GM12878 (cell line): ENCODE measurements at regions of chr15 and their contacts with region 1.

Region 1: DNA sequence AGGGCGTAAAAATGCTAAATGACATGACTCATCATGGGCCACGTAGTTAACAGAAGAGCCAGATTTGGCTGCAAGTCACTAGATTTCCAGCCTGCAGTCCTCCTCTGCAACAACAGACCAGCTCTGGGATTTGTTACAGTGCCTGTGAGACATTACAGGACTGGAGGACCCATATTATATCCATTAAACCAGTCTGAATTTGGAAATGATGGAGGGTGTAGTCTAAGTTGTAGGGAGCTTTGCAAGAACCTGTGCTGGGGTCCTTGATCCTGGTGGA is 10.8 kb downstream of the ZNF774 start:
- DNase-seq: no peak
- ATAC-seq: no peak
- H3K4me3 ChIP-seq: no peak overlapping the region
- H3K27ac ChIP-seq: no peak overlapping the region
- H3K4me1 ChIP-seq: no peaks in the 10 kb centered on the region
- H3K27me3 ChIP-seq: no peaks in the 10 kb centered on the region
- CTCF ChIP-seq: no peak
- EP300 ChIP-seq: no peak
- POLR2A ChIP-seq: no peak
- RAD21 ChIP-seq: no peak

Region 2: DNA sequence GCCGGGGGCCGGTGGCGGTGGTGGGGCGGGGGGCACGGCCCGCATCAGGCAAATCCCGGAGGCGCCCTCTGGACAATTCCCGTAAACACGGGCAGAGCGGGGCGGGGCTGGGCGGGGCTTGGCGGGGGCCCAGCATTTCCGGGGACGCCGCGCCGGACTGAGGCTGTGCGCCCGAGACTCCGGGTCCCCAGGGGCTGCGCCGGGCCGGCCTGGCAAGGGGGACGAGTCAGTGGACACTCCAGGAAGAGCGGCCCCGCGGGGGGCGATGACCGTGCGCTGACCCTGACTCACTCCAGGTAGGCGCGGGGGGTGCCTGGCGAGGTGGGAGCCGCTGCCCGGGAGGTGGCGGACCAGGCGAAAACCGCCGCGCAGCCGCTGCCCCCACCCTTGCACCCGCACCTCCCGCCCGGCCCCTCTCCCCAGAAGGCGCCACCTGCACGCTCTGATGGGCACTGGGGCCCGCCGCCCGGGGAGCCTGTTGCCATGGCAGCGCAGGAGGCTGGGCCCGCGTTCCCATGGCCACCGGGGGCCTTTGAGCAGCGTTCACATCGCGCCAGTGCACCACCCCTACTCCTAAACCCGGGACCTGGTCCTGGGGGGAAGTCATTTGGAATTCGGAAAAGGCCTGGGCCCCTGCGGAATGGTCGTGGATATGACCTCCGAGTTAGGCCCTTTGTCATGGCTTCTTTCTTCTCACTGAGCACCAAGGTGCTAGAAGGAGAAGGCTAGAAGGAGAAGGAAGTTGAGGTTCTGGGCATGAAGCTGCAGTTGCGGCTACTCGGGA is 177.9 kb before region 1 on chr15:
- CTCF ChIA-PET with region 1: no interaction called
- POLR2A ChIA-PET with region 1: no interaction called
- RAD21 ChIA-PET with region 1: no interaction called
- SMC1A ChIA-PET with region 1: no interaction called
- in situ Hi-C with region 1: no loop called
- intact Hi-C with region 1: no loop called
- DNase-seq: no peak
- ATAC-seq: peak; percentile 92
- H3K4me3 ChIP-seq: peak overlapping the region; percentile 80
- H3K27ac ChIP-seq: peak overlapping the region; percentile 86
- H3K4me1 ChIP-seq: peaks cover 16% of the 10 kb centered on the region
- H3K27me3 ChIP-seq: no peaks in the 10 kb centered on the region
- CTCF ChIP-seq: no peak
- EP300 ChIP-seq: no peak
- POLR2A ChIP-seq: peak; percentile 66
- RAD21 ChIP-seq: no peak

Region 3: GRCh38 chr15:90306560-90306959 is 56.3 kb before region 1 on chr15:
- CTCF ChIA-PET with region 1: interaction called, 11 read pairs
- POLR2A ChIA-PET with region 1: no interaction called
- RAD21 ChIA-PET with region 1: no interaction called
- SMC1A ChIA-PET with region 1: interaction called, 4 read pairs
- in situ Hi-C with region 1: no loop called
- intact Hi-C with region 1: no loop called
- DNase-seq: peak; percentile 36
- ATAC-seq: peak; percentile 96
- H3K4me3 ChIP-seq: peak overlapping the region; percentile 17; the same call in 1 of the 2 replicates
- H3K27ac ChIP-seq: peak overlapping the region; percentile 60
- H3K4me1 ChIP-seq: peaks cover 22% of the 10 kb centered on the region
- H3K27me3 ChIP-seq: no peaks in the 10 kb centered on the region
- CTCF ChIP-seq: peak in 1 of 3 experiments; percentile 37; a peak in 2 of 6 replicates
- EP300 ChIP-seq: no peak
- POLR2A ChIP-seq: 0 out of 2 replicates have a peak, but pooled peaks have one; percentile 28
- RAD21 ChIP-seq: peak; percentile 39

Region 4: DNA sequence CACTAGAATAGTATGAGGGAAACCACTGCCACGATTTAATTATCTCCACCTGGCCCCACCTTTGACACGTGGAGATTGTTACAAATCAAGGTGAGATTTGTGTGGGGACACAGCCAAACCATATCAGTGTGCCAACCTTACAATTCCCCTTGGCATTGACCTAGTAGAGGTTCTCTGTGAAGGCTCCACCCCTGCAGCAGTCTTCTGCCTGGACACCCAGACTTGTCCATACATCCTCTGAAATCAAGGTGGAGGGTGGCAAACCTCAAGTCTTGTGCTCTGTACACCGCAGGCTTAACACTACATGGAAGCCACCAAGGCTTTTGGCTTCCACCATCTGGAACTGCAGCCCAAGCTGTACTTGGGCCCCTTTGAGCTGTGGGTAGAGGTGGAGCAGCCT is 16.4 kb after region 1 on chr15:
- CTCF ChIA-PET with region 1: interaction called, 12 read pairs
- POLR2A ChIA-PET with region 1: no interaction called
- RAD21 ChIA-PET with region 1: interaction called, 3 read pairs
- SMC1A ChIA-PET with region 1: interaction called, 16 read pairs
- in situ Hi-C with region 1: no loop called
- intact Hi-C with region 1: no loop called
- DNase-seq: no peak
- ATAC-seq: no peak
- H3K4me3 ChIP-seq: no peak overlapping the region
- H3K27ac ChIP-seq: no peak overlapping the region
- H3K4me1 ChIP-seq: peaks cover 5% of the 10 kb centered on the region; the same call in 1 of the 2 replicates
- H3K27me3 ChIP-seq: no peaks in the 10 kb centered on the region
- CTCF ChIP-seq: no peak
- EP300 ChIP-seq: no peak
- POLR2A ChIP-seq: no peak
- RAD21 ChIP-seq: no peak

Region 5: GRCh38 chr15:90387537-90388461 is 24.9 kb after region 1 on chr15 and contains the start of gene IQGAP1:
- CTCF ChIA-PET with region 1: interaction called, 8 read pairs
- POLR2A ChIA-PET with region 1: interaction called, 6 read pairs
- RAD21 ChIA-PET with region 1: interaction called, 12 read pairs
- SMC1A ChIA-PET with region 1: interaction called, 4 read pairs
- in situ Hi-C with region 1: no loop called
- intact Hi-C with region 1: no loop called
- DNase-seq: peak; percentile 83
- ATAC-seq: peak; percentile 95
- H3K4me3 ChIP-seq: peak within 1 kb of the TSS; percentile 94
- H3K27ac ChIP-seq: peak within 1 kb of the TSS; percentile 91
- H3K4me1 ChIP-seq: peaks cover 4% of the 10 kb centered on the region; the same call in 1 of the 2 replicates
- H3K27me3 ChIP-seq: no peaks in the 10 kb centered on the region
- CTCF ChIP-seq: no peak
- EP300 ChIP-seq: no peak
- POLR2A ChIP-seq: peak; percentile 96
- RAD21 ChIP-seq: no peak
- polyA plus RNA-seq, gene IQGAP1: 65.2 to 66.6 TPM

Region 6: DNA sequence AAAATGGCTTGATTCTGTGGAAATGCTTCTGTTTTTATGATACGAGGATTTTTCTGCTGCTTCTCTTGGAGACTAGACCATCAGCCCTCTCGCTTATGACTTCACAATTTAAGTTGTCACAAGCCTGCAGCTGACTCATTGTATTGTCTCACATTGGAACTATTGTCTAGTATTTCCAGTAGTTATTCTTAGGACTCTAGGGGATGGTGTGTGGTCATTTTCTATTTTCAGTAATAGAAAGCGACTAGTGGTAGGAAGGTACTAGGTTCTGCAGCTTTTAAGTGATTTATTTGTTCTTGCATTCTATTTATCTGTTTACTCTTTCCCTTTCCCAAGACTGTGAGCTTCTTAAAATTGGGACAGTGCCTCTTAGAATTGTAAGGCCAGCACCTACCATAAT is 100.5 kb after region 1 on chr15:
- CTCF ChIA-PET with region 1: interaction called, 14 read pairs
- POLR2A ChIA-PET with region 1: no interaction called
- RAD21 ChIA-PET with region 1: interaction called, 6 read pairs
- SMC1A ChIA-PET with region 1: interaction called, 4 read pairs
- in situ Hi-C with region 1: no loop called
- intact Hi-C with region 1: loop called (anchors 5 kb)
- DNase-seq: no peak
- ATAC-seq: peak; percentile 88
- H3K4me3 ChIP-seq: no peak overlapping the region
- H3K27ac ChIP-seq: no peak overlapping the region
- H3K4me1 ChIP-seq: peaks cover 3% of the 10 kb centered on the region; the same call in 1 of the 2 replicates
- H3K27me3 ChIP-seq: no peaks in the 10 kb centered on the region
- CTCF ChIP-seq: no peak
- EP300 ChIP-seq: no peak
- POLR2A ChIP-seq: no peak
- RAD21 ChIP-seq: no peak

Region 7: DNA sequence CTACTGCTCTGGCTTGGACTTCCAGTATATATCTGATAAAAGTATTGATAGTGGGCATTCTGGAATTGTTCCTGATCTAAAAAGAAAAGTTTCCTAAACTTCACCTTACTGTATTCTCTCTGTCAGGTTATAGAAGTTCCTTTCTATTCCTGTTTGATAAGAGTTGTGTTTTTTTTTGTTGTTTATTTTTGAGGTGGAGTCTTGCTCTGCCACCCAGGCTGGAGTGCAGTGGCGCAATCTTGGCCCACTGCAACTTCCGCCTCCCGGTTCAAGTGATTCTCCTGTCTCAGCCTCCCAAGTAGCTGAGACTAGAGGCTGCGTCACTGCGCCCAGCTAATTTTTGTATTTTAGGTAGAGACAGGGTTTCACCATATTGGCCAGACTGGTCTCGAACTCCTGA is 367.4 kb after region 1 on chr15:
- CTCF ChIA-PET with region 1: no interaction called
- POLR2A ChIA-PET with region 1: no interaction called
- RAD21 ChIA-PET with region 1: no interaction called
- SMC1A ChIA-PET with region 1: no interaction called
- in situ Hi-C with region 1: no loop called
- intact Hi-C with region 1: no loop called
- DNase-seq: no peak
- ATAC-seq: no peak
- H3K4me3 ChIP-seq: no peak overlapping the region
- H3K27ac ChIP-seq: no peak overlapping the region
- H3K4me1 ChIP-seq: no peaks in the 10 kb centered on the region
- H3K27me3 ChIP-seq: no peaks in the 10 kb centered on the region
- CTCF ChIP-seq: no peak
- EP300 ChIP-seq: no peak
- POLR2A ChIP-seq: no peak
- RAD21 ChIP-seq: no peak